IMR-90 (cell line): ENCODE measurements at regions of chr1 and their contacts with region 1.

Region 1: DNA sequence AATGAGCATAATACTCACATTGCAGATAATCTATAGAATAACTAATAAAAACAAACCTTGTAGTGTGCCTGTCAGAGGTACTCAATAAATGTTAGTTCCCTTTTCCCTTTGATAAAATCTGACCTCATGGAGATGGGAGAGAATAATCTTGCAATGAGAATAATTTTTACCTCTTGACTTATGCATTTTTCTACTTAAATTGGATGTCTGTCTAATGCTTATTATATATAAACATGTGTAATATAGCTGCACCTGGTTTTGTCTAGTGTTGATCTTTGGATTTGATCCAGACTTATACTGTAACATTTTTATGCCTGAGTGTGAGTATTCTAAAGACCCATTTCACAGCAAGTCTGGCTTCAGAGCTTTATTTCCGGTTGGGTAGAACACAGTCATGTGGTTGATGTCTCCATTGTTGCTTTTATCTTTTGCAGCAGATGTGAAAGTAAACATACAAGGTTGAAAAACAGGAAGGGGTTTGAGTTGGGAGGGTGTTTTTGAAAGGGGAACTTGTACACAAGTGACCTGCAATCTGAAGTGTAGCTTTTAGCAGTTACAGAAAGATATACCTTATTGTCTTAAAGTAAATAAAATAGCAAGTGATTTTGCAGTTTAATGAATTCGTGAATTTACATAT is 12.4 kb downstream of the EPB41 start:
- DNase-seq: peak; percentile 4
- ATAC-seq: no peak
- H3K4me3 ChIP-seq: no peak overlapping the region
- H3K27ac ChIP-seq: no peak overlapping the region
- H3K4me1 ChIP-seq: peaks cover 5% of the 10 kb centered on the region; the same call in 1 of the 2 replicates
- H3K27me3 ChIP-seq: no peaks in the 10 kb centered on the region
- CTCF ChIP-seq: no peak
- POLR2A ChIP-seq: no peak
- RAD21 ChIP-seq: no peak

Region 2: DNA sequence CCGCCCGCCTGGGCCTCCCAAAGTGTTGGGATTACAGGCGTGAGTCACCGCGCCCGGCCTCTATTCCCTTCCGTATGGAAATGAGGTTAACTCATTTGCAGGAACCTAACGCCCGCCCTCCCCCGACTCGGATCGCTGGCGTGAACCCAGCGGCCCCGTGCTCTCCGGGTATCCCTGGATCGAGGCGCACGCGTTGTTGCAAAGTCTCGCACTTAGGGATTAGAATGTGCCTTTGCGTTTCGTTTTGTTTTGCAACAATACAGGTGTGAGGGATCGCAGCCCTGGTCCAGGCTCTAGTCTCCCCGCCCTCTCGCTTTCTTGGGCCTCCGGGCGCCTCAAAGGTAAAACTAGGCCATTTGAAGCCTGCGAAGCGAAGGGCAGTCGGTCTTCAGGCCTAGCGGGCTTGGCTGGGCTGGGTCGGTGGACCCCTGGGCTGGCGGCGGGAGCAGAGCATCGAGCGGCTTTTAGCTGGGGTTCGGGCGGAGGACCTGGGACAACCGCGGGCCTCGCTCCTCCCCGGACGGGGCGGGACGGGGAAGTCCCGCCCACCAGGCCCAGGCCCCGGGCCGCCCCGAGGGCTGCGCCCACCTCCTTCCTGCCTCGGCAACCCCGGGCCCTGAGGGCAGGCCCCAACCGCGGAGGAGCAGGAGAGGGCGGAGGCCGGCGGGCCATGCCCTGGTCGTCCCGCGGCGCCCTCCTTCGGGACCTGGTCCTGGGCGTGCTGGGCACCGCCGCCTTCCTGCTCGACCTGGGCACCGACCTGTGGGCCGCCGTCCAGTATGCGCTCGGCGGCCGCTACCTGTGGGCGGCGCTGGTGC is 967.1 kb before region 1 on chr1 and contains the start of gene XKR8:
- CTCF ChIA-PET with region 1: no interaction called
- POLR2A ChIA-PET with region 1: no interaction called
- dilution Hi-C with region 1: no loop called
- in situ Hi-C with region 1: no loop called
- intact Hi-C with region 1: no loop called
- DNase-seq: peak; percentile 64
- ATAC-seq: peak; percentile 97
- H3K4me3 ChIP-seq: peak within 1 kb of the TSS; percentile 58
- H3K27ac ChIP-seq: peak within 1 kb of the TSS; percentile 87
- H3K4me1 ChIP-seq: peaks cover 14% of the 10 kb centered on the region
- H3K27me3 ChIP-seq: peaks cover 6% of the 10 kb centered on the region
- CTCF ChIP-seq: peak; percentile 43
- POLR2A ChIP-seq: no peak; the same call in 1 of the 2 replicates
- RAD21 ChIP-seq: 0 out of 2 replicates have a peak, but pooled peaks have one; percentile 36
- total RNA-seq, gene XKR8: 1.1 TPM in 2 replicates

Region 3: GRCh38 chr1:28893403-28894102 is 33.2 kb before region 1 on chr1:
- CTCF ChIA-PET with region 1: no interaction called
- POLR2A ChIA-PET with region 1: no interaction called
- dilution Hi-C with region 1: no loop called
- in situ Hi-C with region 1: no loop called
- intact Hi-C with region 1: no loop called
- DNase-seq: peak; percentile 12
- ATAC-seq: peak; percentile 54
- H3K4me3 ChIP-seq: no peak overlapping the region
- H3K27ac ChIP-seq: no peak overlapping the region
- H3K4me1 ChIP-seq: no peaks in the 10 kb centered on the region
- H3K27me3 ChIP-seq: no peaks in the 10 kb centered on the region; the same call in 1 of the 2 replicates
- CTCF ChIP-seq: peak; percentile 43
- POLR2A ChIP-seq: no peak
- RAD21 ChIP-seq: peak; percentile 44

Region 4: GRCh38 chr1:28965271-28965870 is 38.6 kb after region 1 on chr1:
- CTCF ChIA-PET with region 1: no interaction called
- POLR2A ChIA-PET with region 1: interaction called, 19 read pairs
- dilution Hi-C with region 1: no loop called
- in situ Hi-C with region 1: no loop called
- intact Hi-C with region 1: no loop called
- DNase-seq: no peak
- ATAC-seq: no peak
- H3K4me3 ChIP-seq: no peak overlapping the region
- H3K27ac ChIP-seq: no peak overlapping the region
- H3K4me1 ChIP-seq: no peaks in the 10 kb centered on the region
- H3K27me3 ChIP-seq: no peaks in the 10 kb centered on the region
- CTCF ChIP-seq: no peak
- POLR2A ChIP-seq: no peak
- RAD21 ChIP-seq: no peak